Activated naive CD8-positive, alpha-beta T cell treated with anti-CD3 and anti-CD28 coated beads, Interleukin-2, amount 10 ng/mL, durations not matched to agents 7 days and 5 days (primary cell): ENCODE measurements at regions of chr9 and their contacts with region 1.

Region 1: DNA sequence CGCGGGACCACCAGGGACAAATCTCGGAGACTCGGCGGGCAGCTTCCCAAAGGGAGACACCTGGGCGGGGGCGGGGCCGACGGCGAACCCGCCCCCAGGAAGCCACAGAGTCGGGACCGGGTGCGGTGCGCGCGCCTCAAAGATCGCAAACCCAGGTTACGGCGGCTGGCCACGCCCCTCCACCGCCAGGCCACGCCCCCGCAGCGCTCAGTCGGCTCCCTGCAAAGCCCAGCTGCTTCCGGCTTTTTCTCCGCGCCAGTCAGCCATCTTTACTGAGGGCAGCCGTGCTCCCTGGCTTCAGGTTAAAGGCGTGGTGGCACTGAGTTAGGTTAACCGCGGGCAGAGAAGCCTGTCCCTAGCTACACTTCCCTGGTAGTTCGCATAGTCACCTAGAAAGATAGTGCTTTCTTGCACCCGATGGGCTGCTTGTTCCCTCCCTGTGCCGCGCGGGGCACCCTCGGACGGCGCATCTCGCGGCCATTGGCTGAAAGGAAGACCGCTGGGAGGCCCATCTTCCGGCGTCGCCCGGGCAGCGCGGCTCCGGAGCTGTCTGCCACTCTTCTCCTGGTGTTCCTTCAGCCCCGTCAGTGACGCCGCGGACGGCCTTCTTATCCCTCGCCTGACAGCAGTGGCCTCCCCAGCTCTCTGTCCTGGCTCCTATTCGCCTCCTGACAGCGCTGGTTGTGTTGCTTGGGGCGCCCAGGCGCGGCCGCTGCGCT is at the start of gene TBC1D2:
- DNase-seq: peak; percentile 99
- ATAC-seq: peak; percentile 82
- H3K4me3 Mint-ChIP-seq: peak within 1 kb of the TSS; percentile 98
- H3K27ac Mint-ChIP-seq: peak within 1 kb of the TSS; percentile 97
- H3K4me1 Mint-ChIP-seq: peaks cover 16% of the 10 kb centered on the region
- H3K27me3 Mint-ChIP-seq: peaks cover 6% of the 10 kb centered on the region
- total RNA-seq, gene TBC1D2: 6.4 to 6.8 TPM

Region 2: DNA sequence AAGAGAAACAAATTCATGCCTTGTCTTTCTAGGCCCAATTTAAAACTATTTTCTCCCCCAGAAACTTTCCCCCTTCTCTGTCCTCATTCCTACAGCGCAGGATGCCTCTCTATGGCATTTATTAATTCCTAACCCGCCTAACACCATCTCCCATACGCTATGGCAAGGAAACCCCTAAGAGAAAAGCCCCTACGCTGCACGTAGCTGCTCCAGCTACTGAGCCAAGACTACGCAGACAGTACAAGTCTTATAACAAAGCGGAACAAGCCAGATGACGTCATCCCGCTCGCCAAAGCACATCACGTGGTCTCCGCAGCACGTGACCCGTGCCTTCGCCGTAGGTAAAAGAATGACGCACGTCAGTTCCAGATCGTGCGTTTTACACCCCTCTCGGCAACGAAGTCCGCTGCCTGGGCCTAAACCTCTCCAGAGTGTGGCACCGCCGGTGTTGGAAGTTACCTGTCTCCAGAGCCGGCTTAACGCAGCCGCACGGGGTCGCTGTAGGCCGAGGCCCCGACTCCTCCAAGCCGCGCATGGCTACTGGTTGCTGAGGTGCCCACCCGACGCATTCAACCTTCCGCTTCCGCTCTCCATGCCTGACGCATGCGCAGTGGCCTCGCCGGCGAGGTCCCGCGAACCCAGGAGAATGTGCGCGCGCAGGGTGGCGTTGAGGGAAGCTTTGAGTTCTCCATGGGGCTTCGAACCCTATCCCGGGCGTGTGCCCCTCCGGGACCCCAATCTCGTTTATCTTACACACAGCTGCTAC is 333.6 kb before region 1 on chr9 and contains the start of gene TRMO:
- POLR2A ChIA-PET with region 1: interaction called, 27 read pairs
- DNase-seq: peak; percentile 99
- ATAC-seq: peak; percentile 83
- H3K4me3 Mint-ChIP-seq: peak within 1 kb of the TSS; percentile 96
- H3K27ac Mint-ChIP-seq: peak within 1 kb of the TSS; percentile 100
- H3K4me1 Mint-ChIP-seq: peaks cover 37% of the 10 kb centered on the region
- H3K27me3 Mint-ChIP-seq: peaks cover 4% of the 10 kb centered on the region
- total RNA-seq, gene TRMO: 25.6 to 27.6 TPM

Region 3: DNA sequence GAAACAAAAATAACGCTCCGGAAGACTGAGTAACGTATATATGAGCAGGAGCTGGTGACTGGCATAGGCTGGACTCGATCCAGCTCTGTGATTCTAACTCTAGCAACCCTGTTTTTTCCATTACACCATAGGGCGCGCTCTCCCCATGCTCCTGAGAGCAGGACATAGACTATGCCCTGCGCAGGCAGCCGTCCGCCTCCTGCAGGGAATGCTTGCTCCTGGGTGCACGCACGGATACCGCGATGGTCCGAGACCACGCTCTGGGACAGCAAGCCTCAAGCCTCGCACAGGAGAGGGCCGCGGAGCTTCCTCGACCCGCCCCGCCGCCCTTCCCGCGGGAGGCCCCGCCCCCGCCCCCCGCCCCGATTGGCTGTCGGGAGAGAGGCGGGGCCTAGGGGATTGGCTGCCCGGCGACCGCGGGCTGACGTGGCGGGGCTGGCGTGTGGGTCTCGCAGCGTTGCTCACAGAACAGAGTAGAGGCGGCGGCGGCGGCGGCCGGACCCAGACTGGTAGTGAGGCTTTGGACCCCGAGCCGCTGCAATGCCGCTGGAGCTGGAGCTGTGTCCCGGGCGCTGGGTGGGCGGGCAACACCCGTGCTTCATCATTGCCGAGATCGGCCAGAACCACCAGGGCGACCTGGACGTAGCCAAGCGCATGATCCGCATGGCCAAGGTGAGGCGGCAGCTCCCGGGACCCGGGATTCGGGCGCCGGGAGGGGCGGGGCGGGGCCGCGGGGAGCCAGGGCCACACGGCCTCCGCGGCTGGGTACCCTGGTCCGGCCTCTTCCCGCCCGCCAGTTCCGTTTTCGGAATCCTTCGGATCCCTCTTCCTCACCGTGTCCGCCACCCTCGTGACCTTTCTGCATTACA is 199.2 kb before region 1 on chr9 and contains the start of gene NANS:
- POLR2A ChIA-PET with region 1: interaction called, 34 read pairs
- DNase-seq: peak; percentile 94
- ATAC-seq: peak; percentile 94
- H3K4me3 Mint-ChIP-seq: peak within 1 kb of the TSS; percentile 94
- H3K27ac Mint-ChIP-seq: peak within 1 kb of the TSS; percentile 94
- H3K4me1 Mint-ChIP-seq: peaks cover 20% of the 10 kb centered on the region
- H3K27me3 Mint-ChIP-seq: no peaks in the 10 kb centered on the region
- total RNA-seq, gene NANS: 30.0 to 31.1 TPM

Region 4: DNA sequence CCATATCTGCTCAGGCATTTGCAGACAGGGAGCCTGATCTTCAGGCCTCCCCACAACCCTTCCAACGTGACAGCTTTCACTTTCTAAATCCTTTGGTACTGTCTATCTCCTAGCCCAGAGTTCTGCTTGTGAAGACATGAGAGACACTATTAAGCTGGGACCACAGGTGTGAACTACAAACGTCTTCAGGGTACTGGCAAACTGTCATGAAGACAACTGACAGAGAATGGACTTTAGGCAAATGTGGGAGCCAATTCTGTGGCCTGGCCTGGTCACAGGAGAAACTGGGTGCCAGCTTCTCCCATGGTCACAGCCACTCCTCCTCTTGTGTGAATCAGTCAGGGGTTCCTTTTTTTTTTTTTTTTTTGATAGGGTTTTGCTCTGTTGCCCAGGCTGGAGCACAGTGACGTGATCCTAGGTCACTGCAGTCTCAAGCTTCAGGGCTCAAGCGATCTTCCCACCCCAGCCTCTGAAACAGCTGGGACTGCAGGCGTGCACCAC is 147.2 kb before region 1 on chr9:
- POLR2A ChIA-PET with region 1: interaction called, 10 read pairs
- DNase-seq: peak; percentile 58
- ATAC-seq: peak; percentile 91
- H3K4me3 Mint-ChIP-seq: peak overlapping the region; percentile 70
- H3K27ac Mint-ChIP-seq: peak overlapping the region; percentile 98
- H3K4me1 Mint-ChIP-seq: peaks cover 72% of the 10 kb centered on the region
- H3K27me3 Mint-ChIP-seq: no peaks in the 10 kb centered on the region

Region 5: DNA sequence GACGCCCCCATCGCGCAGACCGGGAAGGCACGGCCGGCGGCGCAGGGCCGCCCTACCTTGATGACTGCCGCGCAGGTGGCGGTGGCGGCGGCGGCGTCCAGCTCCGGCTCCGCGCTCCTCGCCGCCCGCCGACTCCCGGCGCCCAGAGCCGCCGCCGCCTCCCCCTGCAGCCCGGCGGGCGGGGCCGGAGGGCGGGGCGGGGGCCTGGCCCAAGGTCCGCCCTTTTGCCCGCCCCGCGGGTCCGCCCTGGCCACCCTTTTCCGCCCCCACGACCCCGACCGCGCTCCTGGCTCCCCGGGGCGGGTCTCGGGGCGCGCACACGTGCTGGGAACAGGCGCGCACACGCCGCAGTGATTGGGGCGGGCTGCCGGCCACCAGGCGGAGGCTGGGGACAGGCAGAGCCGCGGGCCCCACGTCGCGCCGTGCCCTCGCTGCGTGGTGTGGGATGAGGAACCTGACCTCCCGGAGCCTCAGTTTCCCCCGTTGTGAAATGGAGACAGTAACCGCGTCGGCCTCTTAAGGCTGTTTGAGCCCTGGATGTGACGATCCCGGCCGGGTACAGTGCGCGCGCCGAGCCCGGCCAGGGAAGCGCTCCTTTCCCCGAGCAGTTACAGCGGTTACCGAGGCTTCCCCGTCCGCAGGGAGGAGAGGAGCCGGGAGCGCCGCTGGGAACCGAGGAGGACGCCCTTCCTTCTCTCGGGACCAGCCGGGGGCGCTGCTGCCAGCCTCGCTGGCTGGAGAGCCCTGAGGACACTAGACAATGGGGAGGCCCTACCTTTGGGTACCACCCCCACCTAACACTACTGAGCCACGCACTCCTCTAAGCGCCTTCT is 63.0 kb before region 1 on chr9 and contains the start of gene CORO2A:
- POLR2A ChIA-PET with region 1: interaction called, 19 read pairs
- DNase-seq: peak; percentile 86
- ATAC-seq: peak; percentile 72
- H3K4me3 Mint-ChIP-seq: peak within 1 kb of the TSS; percentile 80
- H3K27ac Mint-ChIP-seq: peak within 1 kb of the TSS; percentile 63
- H3K4me1 Mint-ChIP-seq: peaks cover 15% of the 10 kb centered on the region
- H3K27me3 Mint-ChIP-seq: peaks cover 4% of the 10 kb centered on the region
- total RNA-seq, gene CORO2A: 11.7 to 12.0 TPM

Region 6: GRCh38 chr9:98341157-98342097 is 85.7 kb after region 1 on chr9:
- POLR2A ChIA-PET with region 1: no interaction called
- DNase-seq: no peak
- ATAC-seq: no peak
- H3K4me3 Mint-ChIP-seq: no peak overlapping the region
- H3K27ac Mint-ChIP-seq: no peak overlapping the region
- H3K4me1 Mint-ChIP-seq: peaks cover 3% of the 10 kb centered on the region
- H3K27me3 Mint-ChIP-seq: peaks cover 23% of the 10 kb centered on the region